ENCODE measurements at regions of chr17 and their contacts with region 1.

Region 1: DNA sequence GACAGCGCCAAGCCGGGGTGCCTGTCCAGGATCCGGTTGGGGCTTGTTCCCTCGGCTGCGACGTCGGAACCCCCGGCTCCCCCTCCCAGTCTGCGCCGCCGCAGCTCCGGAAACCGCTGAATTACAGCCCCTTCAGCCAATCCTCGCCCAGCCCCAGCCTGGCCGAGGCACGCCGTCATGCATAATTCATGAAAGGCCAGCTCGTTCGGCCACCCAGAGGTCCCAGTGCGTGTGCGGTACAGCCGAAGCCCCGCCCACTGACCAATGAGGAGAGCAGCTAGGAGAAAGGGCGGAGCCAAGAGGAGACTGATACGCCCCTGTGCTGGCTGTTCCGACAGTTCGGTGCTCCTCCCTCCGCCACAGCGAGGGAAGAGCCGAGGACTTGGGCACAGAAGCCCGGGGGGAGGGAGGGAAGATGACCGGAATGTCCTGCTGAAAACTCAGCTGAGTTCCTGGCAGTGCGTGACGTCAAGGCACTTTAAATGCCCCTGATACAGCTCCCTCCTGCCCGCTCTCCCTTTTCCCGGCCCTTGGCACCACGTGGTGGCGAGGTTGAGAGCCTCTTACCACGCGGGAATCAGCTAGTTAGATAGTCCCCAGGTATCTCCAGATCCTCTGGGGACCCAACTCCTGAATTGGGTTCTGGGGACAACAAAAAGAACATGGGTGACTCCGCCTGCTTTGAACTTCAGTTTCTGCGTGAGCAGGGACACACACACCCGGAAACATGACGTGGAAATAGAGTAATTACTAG is at the start of gene STAT3:
- DNase-seq: peak; percentile 100
- ATAC-seq: peak; percentile 99
- H3K4me3 ChIP-seq: peak within 1 kb of the TSS; percentile 93 to 98 (median 96)
- H3K27ac ChIP-seq: peak within 1 kb of the TSS; percentile 78
- H3K4me1 ChIP-seq: peaks cover 68% of the 10 kb centered on the region
- H3K27me3 ChIP-seq: no peaks in the 10 kb centered on the region; a peak in 1 of 5 replicates
- CTCF ChIP-seq: peak; percentile 57
- EP300 ChIP-seq: peak; percentile 97 to 100; a peak in 3 of 4 replicates
- POLR2A ChIP-seq: peak; percentile 54 to 88
- RAD21 ChIP-seq: peak; percentile 54; the same call in 1 of the 2 replicates
- total RNA-seq, gene STAT3: 61.8 and 82.7 TPM in 2 replicates

Region 2: GRCh38 chr17:42312285-42313130 is 76.0 kb before region 1 on chr17:
- CTCF ChIA-PET with region 1: no interaction called
- POLR2A ChIA-PET with region 1: interaction called, 47 read pairs
- in situ Hi-C with region 1: no loop called
- intact Hi-C with region 1: no loop called
- DNase-seq: peak; percentile 80
- ATAC-seq: peak; percentile 83
- H3K4me3 ChIP-seq: peak overlapping the region; percentile 47 to 65 (median 51)
- H3K27ac ChIP-seq: peak overlapping the region; percentile 73
- H3K4me1 ChIP-seq: peaks cover 90% of the 10 kb centered on the region
- H3K27me3 ChIP-seq: no peaks in the 10 kb centered on the region
- CTCF ChIP-seq: peak; percentile 96
- EP300 ChIP-seq: peak in 1 of 2 experiments; percentile 13; a peak in 1 of 4 replicates
- POLR2A ChIP-seq: peak in 1 of 2 experiments; percentile 56; a peak in 1 of 4 replicates
- RAD21 ChIP-seq: peak; percentile 92

Region 3: GRCh38 chr17:42399948-42400843 is 11.6 kb after region 1 on chr17:
- CTCF ChIA-PET with region 1: no interaction called
- POLR2A ChIA-PET with region 1: interaction called, 57 read pairs
- in situ Hi-C with region 1: no loop called
- intact Hi-C with region 1: no loop called
- DNase-seq: no peak
- ATAC-seq: peak; percentile 71
- H3K4me3 ChIP-seq: no peak overlapping the region
- H3K27ac ChIP-seq: no peak overlapping the region
- H3K4me1 ChIP-seq: peaks cover 30% of the 10 kb centered on the region
- H3K27me3 ChIP-seq: no peaks in the 10 kb centered on the region
- CTCF ChIP-seq: no peak
- EP300 ChIP-seq: no peak
- POLR2A ChIP-seq: no peak
- RAD21 ChIP-seq: no peak

Region 4: DNA sequence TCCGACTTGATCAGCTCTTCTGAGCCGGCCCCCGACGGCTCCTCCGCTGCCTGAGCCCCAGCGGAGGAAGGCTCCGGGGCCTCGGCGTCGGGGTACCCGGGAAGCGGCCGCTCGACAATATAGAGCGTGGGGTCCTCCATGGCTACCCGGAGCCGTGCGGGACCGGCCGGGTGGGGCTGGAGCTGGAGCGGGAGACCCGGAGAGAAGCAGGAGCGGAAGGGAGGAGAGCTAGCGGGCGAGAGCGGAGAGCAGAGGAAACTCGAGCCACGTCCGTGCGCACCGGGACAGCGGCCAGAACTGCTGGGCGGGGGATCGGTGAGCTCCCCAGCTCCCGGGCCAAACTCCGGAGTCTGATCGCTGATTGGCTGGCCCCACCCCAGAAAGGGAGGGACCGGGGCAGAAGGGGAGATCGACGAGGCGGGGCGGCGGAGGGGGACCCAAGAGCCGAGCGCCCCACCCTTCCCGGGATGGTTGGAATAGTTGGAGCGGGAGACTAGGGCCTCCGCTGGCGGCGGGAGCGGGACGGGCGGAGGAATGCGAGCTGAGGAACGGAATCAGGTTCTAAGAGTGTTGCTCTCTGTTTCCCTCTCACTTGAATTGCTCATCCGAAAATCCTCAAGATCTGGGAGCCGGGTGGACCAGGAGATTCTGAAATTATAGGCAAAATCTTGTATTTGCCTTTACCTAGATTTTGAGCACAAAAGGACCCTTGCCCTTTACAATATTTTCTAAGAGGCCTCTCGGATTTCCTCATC is 34.6 kb after region 1 on chr17 and contains the start of gene CAVIN1:
- CTCF ChIA-PET with region 1: no interaction called
- POLR2A ChIA-PET with region 1: interaction called, 26 read pairs
- in situ Hi-C with region 1: no loop called
- intact Hi-C with region 1: no loop called
- DNase-seq: peak; percentile 90
- ATAC-seq: peak; percentile 84
- H3K4me3 ChIP-seq: peak within 1 kb of the TSS; percentile 78 to 95 (median 88)
- H3K27ac ChIP-seq: peak within 1 kb of the TSS; percentile 7
- H3K4me1 ChIP-seq: peaks cover 47% of the 10 kb centered on the region
- H3K27me3 ChIP-seq: no peaks in the 10 kb centered on the region; a peak in 1 of 5 replicates
- CTCF ChIP-seq: no peak; the same call in 1 of the 2 replicates
- EP300 ChIP-seq: 0 out of 4 replicates have a peak, but pooled peaks of 1 of the 2 experiments have one; percentile 28
- POLR2A ChIP-seq: peak; percentile 90 to 94
- RAD21 ChIP-seq: no peak
- total RNA-seq, gene CAVIN1: 25.5 and 26.0 TPM in 2 replicates